ENCODE measurements at regions of chr11 and their contacts with region 1.

Region 1: GRCh38 chr11:70082829-70083228 is 4.7 kb downstream of the ANO1 start:
- DNase-seq: no peak

Region 2: GRCh38 chr11:69943066-69943465 is 139.8 kb before region 1 on chr11:
- intact Hi-C with region 1: loop called (anchors 5 kb)
- DNase-seq: no peak

Region 3: GRCh38 chr11:69954756-69955155 is 128.1 kb before region 1 on chr11:
- intact Hi-C with region 1: no loop called
- DNase-seq: no peak

Region 4: GRCh38 chr11:70019576-70020011 is 63.2 kb before region 1 on chr11:
- intact Hi-C with region 1: loop called (anchors 2 kb)
- DNase-seq: peak; percentile 66

Region 5: GRCh38 chr11:70128435-70128906 is 45.6 kb after region 1 on chr11:
- intact Hi-C with region 1: no loop called
- DNase-seq: no peak

Measured in cardiac septum (tissue), 1 donor.